Dorsolateral prefrontal cortex (tissue), 120 donors: ENCODE measurements at regions of chr5 and their contacts with region 1.

Region 1: GRCh38 chr5:177497292-177498033 is at the start of gene PDLIM7:
- DNase-seq: peak; percentile 40 to 93 (median 87)
- H3K4me3 ChIP-seq: peak within 1 kb of the TSS; percentile 40 to 86 (median 73)
- H3K27ac ChIP-seq: peak within 1 kb of the TSS in 49 of 59 donors; percentile 24 to 90 (median 70)
- H3K27me3 ChIP-seq: peaks cover 0 to 10% (median 0%) of the 10 kb centered on the region in 45 donors
- CTCF ChIP-seq: peak in 22 of 56 donors; percentile 7 to 41 (median 20)
- total RNA-seq, gene PDLIM7: 12.0 to 88.0 (median 35.5) TPM

Region 2: DNA sequence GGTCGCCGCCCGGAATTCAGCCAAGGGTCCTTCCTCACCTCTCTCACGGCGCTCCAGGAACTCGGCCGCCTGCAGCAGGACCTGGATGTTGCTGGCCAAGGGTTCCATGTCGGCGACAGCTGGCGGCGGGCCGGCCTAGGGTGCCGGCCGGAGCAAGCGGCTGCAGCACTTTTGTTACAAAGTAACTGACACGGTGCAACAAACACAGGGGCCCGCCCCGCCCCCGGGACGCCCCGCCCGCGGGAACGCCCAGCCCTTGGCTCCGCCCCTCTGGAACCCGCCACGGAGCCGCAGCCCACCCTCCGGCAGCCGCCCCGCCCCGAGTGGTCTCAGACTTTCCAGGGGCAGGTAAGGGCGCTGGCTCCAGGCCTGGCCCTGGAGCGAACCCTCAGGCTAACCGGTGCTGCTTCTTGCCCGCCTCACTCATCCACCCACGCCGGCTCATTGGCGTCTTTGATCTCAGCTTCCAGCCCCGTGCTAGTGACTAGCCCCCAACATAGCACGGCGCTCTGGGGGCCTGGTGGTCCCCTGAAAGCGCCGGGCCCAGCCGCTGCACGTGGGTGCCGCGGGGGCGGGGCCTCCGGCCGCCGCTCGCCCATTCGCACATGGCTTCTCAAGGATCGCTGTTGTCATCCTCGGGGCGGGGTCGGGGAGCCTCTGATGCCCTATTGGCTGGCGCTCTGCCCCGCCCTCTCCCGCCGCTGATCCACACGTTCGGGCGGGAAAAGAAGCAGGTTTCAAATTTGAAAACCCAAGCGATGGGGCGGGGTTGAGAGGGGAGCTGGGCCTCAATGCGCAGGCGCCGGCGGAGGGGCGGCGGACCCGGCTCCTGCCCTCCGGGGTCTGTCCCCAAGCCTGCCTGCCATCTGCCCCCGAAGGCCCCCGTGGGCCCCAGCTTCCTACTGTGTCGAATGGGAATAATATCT is 185.5 kb before region 1 on chr5 and contains the start of gene MXD3:
- intact Hi-C with region 1: loop called (anchors 10 kb)
- DNase-seq: peak; percentile 89 to 98 (median 95)
- H3K4me3 ChIP-seq: peak within 1 kb of the TSS; percentile 39 to 81 (median 67)
- H3K27ac ChIP-seq: no peak within 1 kb of the TSS
- H3K27me3 ChIP-seq: no peaks in the 10 kb centered on the region
- CTCF ChIP-seq: peak in 3 of 56 donors; percentile 7 to 17 (median 16)
- total RNA-seq, gene MXD3: 2.1 to 12.7 (median 5.8) TPM

Region 3: DNA sequence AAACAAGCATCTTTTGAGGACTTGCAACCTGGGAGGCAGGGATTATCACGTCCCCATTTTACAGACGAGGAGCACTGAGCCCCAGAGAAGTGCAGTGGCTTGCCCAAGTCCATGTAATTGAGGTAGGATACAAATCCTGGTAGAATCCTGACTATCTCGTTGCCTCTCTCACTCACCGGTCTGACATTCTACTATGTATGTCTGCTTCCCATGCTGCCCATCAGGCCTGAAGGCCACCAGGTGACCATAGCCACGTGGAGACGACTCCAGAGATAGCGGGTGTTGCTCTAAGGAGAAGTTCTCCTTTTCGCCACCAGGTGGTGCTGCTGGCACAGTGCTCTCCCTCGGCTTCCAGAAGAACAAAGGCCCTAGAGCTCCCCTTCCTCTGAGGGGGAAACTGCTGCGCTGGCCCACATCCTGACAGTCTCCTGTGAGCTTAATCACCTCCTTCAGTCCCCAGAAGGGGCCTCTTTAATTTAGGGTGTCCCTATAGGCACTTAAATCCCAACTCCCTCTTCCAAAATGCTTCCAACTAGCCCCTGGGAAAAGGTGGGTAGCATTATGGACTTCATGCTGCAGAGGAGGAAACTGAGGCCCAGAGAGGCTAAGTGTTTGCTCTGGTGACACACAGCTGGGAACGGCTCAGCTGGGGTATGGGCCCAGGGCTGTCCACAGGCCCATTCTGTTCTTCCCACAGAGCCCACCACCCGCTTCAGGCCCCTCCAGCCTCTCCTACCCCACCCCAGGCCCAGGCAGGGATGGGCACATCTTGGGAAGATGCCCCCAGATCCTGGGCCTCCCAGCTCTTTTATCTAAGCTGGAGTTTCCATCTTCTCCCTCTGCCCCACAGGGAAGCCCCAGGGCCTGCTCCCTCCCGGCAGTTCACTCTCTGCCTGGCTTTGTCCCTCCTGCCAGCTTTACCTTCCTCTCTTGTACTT is 106.8 kb before region 1 on chr5:
- intact Hi-C with region 1: loop called (anchors 1 to 2 kb)
- DNase-seq: peak; percentile 63 to 85 (median 82)
- H3K4me3 ChIP-seq: no peak overlapping the region
- H3K27ac ChIP-seq: no peak overlapping the region
- H3K27me3 ChIP-seq: peaks cover 0 to 8% (median 0%) of the 10 kb centered on the region in 45 donors
- CTCF ChIP-seq: peak; percentile 93 to 100 (median 99)

Region 4: GRCh38 chr5:178677429-178677828 is 1180.0 kb after region 1 on chr5:
- intact Hi-C with region 1: no loop called
- DNase-seq: no peak
- H3K4me3 ChIP-seq: no peak overlapping the region
- H3K27ac ChIP-seq: no peak overlapping the region
- H3K27me3 ChIP-seq: no peaks in the 10 kb centered on the region
- CTCF ChIP-seq: no peak